Activated CD4-positive, alpha-beta T cell treated with anti-CD3 and anti-CD28 coated beads, Interleukin-2, amount 10 ng/mL, durations not matched to agents 7 days and 5 days (primary cell): ENCODE measurements at regions of chr15 and their contacts with region 1.

Region 1: GRCh38 chr15:38665586-38666305 is 101.1 kb upstream of the RASGRP1 start:
- DNase-seq: no peak
- H3K4me3 Mint-ChIP-seq: no peak overlapping the region
- H3K27ac Mint-ChIP-seq: peak overlapping the region; percentile 55
- H3K4me1 Mint-ChIP-seq: peaks cover 86% of the 10 kb centered on the region
- H3K27me3 Mint-ChIP-seq: no peaks in the 10 kb centered on the region

Region 2: DNA sequence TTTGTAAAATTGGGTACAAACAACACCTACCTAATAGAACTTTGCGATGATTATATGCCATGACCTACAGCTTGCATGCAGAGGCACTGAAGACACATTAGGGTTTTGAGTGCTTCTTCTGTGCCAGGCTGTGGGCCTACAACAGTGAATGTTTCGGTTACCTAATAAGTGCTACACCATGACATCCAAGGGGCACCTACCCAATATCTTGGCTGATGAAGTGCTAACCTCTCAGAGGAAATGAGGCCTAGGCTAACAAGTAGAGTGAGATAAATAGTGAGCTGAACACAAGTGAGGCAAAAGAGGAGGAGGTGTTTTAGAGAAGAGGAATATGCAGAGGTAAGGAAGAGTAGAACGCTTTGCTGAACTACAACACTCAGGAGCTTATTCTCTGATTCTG is 88.9 kb before region 1 on chr15:
- CTCF ChIA-PET with region 1: no interaction called
- POLR2A ChIA-PET with region 1: no interaction called
- DNase-seq: no peak
- H3K4me3 Mint-ChIP-seq: no peak overlapping the region
- H3K27ac Mint-ChIP-seq: peak overlapping the region; percentile 44
- H3K4me1 Mint-ChIP-seq: peaks cover 22% of the 10 kb centered on the region
- H3K27me3 Mint-ChIP-seq: peaks cover 2% of the 10 kb centered on the region

Region 3: GRCh38 chr15:38651328-38652038 is 14.3 kb before region 1 on chr15:
- CTCF ChIA-PET with region 1: interaction called, 57 read pairs
- POLR2A ChIA-PET with region 1: interaction called, 15 read pairs
- DNase-seq: peak; percentile 81
- H3K4me3 Mint-ChIP-seq: peak overlapping the region; percentile 77
- H3K27ac Mint-ChIP-seq: peak overlapping the region; percentile 97
- H3K4me1 Mint-ChIP-seq: peaks cover 89% of the 10 kb centered on the region
- H3K27me3 Mint-ChIP-seq: no peaks in the 10 kb centered on the region

Region 4: GRCh38 chr15:38683382-38684242 is 17.9 kb after region 1 on chr15:
- CTCF ChIA-PET with region 1: interaction called, 142 read pairs
- POLR2A ChIA-PET with region 1: no interaction called
- DNase-seq: peak; percentile 82
- H3K4me3 Mint-ChIP-seq: peak overlapping the region; percentile 55
- H3K27ac Mint-ChIP-seq: peak overlapping the region; percentile 95
- H3K4me1 Mint-ChIP-seq: peaks cover 81% of the 10 kb centered on the region
- H3K27me3 Mint-ChIP-seq: no peaks in the 10 kb centered on the region